IMR-90 (cell line): ENCODE measurements at regions of chr7 and their contacts with region 1.

Region 1: DNA sequence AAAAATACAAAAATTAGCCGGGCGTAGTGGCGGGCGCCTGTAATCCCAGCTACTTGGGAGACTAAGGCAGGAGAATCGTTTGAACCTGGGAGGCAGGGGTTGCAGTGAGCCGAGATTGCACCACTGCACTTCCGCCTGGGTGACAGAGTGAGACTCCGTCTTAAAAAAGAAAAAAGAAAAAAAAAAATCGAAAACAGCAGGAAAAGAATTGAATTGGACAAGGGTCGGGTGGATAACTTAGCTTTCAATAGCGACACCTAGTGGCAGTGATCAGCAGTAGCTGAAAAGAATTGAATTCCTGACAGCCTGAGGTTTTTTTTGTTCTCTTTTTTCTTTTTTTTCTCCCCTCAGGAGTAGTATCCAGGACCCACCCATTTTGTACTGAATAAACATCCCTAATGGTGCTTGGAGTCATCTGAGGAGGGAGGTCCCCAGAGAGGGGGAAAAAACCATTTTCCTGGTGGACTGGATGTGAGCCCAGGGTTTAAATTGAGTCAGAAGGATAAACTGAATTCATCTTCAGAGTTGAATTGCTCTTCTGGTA is 55.1 kb downstream of the CYCS start:
- DNase-seq: peak; percentile 88
- ATAC-seq: peak; percentile 52
- H3K4me3 ChIP-seq: no peak overlapping the region
- H3K27ac ChIP-seq: no peak overlapping the region
- H3K4me1 ChIP-seq: peaks cover 4% of the 10 kb centered on the region; the same call in 1 of the 2 replicates
- H3K27me3 ChIP-seq: no peaks in the 10 kb centered on the region
- CTCF ChIP-seq: peak; percentile 94
- POLR2A ChIP-seq: no peak
- RAD21 ChIP-seq: peak; percentile 92

Region 2: DNA sequence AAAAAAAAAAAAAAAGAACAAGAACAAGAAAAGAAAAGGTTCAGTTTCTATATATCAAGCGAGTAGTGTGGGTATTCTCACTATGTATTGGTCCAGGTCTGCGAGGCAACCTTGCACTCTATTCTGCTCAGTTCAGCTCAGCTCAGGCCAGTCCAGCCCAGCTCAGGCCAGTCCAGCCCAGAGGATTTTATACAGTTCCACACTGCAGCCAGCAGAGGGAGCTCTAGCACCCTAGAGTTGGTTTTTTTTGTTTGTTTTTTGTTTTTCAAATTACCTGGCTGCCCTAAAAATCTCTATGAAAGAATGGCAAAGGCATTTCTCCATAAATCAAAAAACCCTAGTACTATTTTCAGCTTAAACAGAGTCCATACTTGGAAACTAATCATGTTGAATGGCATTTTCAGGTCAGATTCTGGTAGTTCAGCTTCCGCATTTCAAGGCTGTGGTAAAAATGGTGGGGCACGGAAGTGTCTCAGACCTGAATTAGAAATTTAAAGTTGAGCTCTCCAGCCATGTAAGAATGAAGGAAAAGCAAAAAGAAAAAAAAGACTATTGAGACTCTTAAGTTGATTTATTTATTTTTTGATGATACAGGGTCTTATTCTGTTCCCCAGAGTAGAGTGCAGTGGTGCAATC is 257.5 kb before region 1 on chr7:
- CTCF ChIA-PET with region 1: interaction called, 6 read pairs
- POLR2A ChIA-PET with region 1: no interaction called
- dilution Hi-C with region 1: loop called (anchors 25 kb)
- in situ Hi-C with region 1: no loop called
- intact Hi-C with region 1: loop called (anchors 1 kb)
- DNase-seq: peak; percentile 36
- ATAC-seq: peak; percentile 95
- H3K4me3 ChIP-seq: no peak overlapping the region
- H3K27ac ChIP-seq: no peak overlapping the region
- H3K4me1 ChIP-seq: no peaks in the 10 kb centered on the region
- H3K27me3 ChIP-seq: no peaks in the 10 kb centered on the region
- CTCF ChIP-seq: peak; percentile 85
- POLR2A ChIP-seq: no peak
- RAD21 ChIP-seq: peak; percentile 77

Region 3: DNA sequence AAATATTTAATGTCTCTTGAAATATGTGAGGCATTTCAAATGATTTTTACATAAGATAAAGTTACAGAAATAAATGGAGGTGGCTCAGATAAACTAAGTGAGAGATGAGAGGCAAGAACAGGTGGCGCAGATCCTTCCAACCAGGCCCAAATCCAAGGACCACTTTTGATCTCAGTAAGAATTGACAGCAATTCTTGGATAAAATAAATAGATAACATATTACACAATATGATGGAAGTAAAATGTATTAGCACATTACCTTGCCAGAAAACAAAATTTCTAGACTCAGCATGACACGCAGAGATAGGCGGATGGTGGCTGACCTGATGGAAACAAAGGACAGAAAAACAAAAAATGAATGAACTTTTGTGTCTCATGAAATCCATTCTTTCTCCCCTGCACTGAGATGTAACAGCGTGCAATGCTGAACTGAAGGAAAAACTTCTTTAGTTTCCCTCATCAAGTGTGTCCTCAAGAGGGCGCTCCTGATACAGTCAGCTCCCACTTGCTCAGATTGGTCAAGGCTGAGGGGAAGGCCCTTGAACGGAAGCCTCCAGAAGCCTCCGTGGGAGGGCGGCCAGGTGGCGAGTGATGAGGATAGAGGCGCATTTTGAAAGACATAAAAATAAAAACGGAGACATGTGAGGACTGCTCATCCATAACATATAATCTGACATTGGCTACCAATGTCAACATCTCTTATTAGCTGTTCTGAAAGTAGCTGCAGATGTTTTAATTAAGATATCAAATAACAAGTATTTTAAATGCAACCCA is 249.9 kb before region 1 on chr7:
- CTCF ChIA-PET with region 1: interaction called, 8 read pairs
- POLR2A ChIA-PET with region 1: no interaction called
- dilution Hi-C with region 1: loop called (anchors 25 kb)
- in situ Hi-C with region 1: no loop called
- intact Hi-C with region 1: loop called (anchors 1 kb)
- DNase-seq: peak; percentile 90
- ATAC-seq: peak; percentile 86
- H3K4me3 ChIP-seq: no peak overlapping the region
- H3K27ac ChIP-seq: no peak overlapping the region
- H3K4me1 ChIP-seq: peaks cover 12% of the 10 kb centered on the region
- H3K27me3 ChIP-seq: no peaks in the 10 kb centered on the region
- CTCF ChIP-seq: peak; percentile 89
- POLR2A ChIP-seq: no peak; the same call in 1 of the 2 replicates
- RAD21 ChIP-seq: peak; percentile 90

Region 4: GRCh38 chr7:24896031-24896501 is 173.9 kb before region 1 on chr7:
- CTCF ChIA-PET with region 1: interaction called, 4 read pairs
- POLR2A ChIA-PET with region 1: no interaction called
- dilution Hi-C with region 1: no loop called
- in situ Hi-C with region 1: no loop called
- intact Hi-C with region 1: loop called (anchors 10 kb)
- DNase-seq: no peak
- ATAC-seq: no peak
- H3K4me3 ChIP-seq: no peak overlapping the region
- H3K27ac ChIP-seq: no peak overlapping the region
- H3K4me1 ChIP-seq: peaks cover 5% of the 10 kb centered on the region; the same call in 1 of the 2 replicates
- H3K27me3 ChIP-seq: no peaks in the 10 kb centered on the region
- CTCF ChIP-seq: no peak
- POLR2A ChIP-seq: no peak
- RAD21 ChIP-seq: no peak

Region 5: DNA sequence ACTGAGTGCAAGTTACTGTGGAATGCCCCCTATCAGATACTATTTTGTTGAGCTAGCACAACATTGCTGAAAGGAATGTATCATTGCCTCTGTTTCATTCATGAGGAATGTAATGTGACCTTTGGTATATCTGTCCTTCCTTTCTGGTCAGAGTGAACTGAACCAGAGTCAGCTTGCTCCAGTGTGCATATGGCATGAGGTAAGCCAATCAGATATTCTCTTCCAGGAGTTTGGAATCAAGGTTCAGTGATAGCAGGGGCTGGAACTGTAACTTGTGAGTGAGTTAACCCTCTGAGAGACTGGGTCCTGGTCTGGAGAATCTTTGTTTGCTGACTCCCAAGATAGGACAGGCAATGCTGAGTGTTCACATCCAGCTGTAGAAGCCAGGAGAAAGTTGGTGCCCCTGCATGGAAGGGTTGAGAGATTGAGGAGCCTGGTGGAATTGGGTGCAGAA is 44.7 kb before region 1 on chr7:
- CTCF ChIA-PET with region 1: interaction called, 5 read pairs
- POLR2A ChIA-PET with region 1: no interaction called
- dilution Hi-C with region 1: no loop called
- in situ Hi-C with region 1: no loop called
- intact Hi-C with region 1: loop called (anchors 2 kb)
- DNase-seq: peak; percentile 94
- ATAC-seq: peak; percentile 94
- H3K4me3 ChIP-seq: no peak overlapping the region
- H3K27ac ChIP-seq: peak overlapping the region; percentile 95
- H3K4me1 ChIP-seq: peaks cover 19% of the 10 kb centered on the region
- H3K27me3 ChIP-seq: no peaks in the 10 kb centered on the region
- CTCF ChIP-seq: 0 out of 2 replicates have a peak, but pooled peaks have one; percentile 8
- POLR2A ChIP-seq: no peak
- RAD21 ChIP-seq: no peak

Region 6: GRCh38 chr7:25037325-25037724 is 32.6 kb before region 1 on chr7:
- CTCF ChIA-PET with region 1: no interaction called
- POLR2A ChIA-PET with region 1: no interaction called
- dilution Hi-C with region 1: no loop called
- in situ Hi-C with region 1: no loop called
- intact Hi-C with region 1: no loop called
- DNase-seq: no peak
- ATAC-seq: no peak
- H3K4me3 ChIP-seq: no peak overlapping the region
- H3K27ac ChIP-seq: no peak overlapping the region
- H3K4me1 ChIP-seq: peaks cover 9% of the 10 kb centered on the region
- H3K27me3 ChIP-seq: no peaks in the 10 kb centered on the region
- CTCF ChIP-seq: no peak
- POLR2A ChIP-seq: no peak
- RAD21 ChIP-seq: no peak